Right ventricle myocardium inferior (tissue), 1 donor: ENCODE measurements at regions of chr6 and their contacts with region 1.

Region 1: DNA sequence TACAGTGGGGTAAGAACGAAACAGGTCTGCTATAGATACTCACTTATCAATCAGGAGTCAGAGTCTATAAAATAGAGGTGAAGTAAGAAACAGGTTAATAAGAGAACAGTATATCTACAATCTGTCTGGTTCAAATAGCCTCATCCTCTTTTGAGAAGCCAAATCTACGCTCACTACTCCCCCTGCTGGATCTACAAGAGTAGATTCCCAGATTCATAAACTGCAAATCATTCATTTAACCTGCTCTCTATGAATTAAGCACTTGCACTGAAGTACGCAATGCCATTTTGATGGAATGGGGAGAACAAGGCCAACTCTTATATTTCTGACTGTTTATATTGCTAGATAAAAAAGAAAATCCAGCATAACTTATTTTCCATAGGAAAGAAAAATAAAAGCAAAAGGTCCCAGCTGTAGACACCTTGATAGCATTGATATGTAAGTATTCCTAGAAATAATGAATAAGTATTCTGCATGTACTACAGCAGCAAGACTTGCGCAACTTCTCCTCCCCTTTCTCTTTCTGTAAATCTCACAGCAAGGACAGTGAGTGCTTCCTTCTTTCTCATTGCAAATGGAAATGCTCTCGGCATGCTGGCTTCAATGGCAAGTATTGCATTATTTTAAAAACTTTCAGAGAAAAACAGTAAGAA is 92.3 kb downstream of the RFX6 start:
- DNase-seq: no peak
- ATAC-seq: no peak

Region 2: GRCh38 chr6:116779573-116780164 is 189.7 kb before region 1 on chr6:
- intact Hi-C with region 1: loop called (anchors 10 kb)
- DNase-seq: no peak
- ATAC-seq: no peak

Region 3: DNA sequence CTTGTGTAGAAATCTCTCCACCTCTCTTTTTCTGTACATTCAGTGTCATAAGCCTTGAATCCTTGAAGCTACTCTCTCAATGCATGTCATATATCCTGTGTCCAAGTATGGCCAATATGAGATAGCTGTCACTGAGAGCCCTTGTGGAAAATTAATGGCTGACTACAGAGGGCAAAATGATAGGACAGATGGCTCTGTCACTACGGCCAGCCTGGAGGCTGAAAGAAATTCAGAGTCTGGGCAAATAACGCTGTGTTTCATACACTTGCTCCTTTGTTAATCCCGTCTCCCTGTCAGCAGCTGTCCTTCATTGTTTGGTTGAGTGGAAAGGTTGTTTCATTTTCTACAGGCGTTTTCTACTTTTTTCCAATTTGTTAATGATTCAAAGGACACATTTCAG is 225.6 kb after region 1 on chr6:
- intact Hi-C with region 1: loop called (anchors 5 kb)
- DNase-seq: no peak
- ATAC-seq: no peak

Region 4: DNA sequence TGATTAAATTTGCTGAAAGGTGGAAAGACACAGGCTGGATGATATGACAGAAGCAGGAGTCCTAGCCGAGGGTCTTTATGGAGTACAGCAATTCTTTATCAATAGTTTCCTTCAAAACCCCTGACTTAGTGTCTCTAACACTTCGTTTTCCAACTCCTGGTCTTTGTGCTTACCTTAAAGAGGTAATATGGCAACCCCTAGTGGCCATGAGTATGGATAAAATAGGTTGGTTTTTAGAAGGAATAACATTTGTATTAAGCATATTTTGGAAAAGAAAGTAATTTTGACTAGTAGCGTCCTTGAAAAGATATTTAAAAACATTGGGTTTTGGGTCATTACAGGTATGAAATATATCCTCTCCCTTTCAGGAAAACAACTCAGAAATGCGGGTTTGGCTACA is 347.9 kb after region 1 on chr6:
- intact Hi-C with region 1: loop called (anchors 5 kb)
- DNase-seq: no peak
- ATAC-seq: no peak